Breast epithelium (tissue), 4 donors: ENCODE measurements at regions of chr11 and their contacts with region 1.

Region 1: DNA sequence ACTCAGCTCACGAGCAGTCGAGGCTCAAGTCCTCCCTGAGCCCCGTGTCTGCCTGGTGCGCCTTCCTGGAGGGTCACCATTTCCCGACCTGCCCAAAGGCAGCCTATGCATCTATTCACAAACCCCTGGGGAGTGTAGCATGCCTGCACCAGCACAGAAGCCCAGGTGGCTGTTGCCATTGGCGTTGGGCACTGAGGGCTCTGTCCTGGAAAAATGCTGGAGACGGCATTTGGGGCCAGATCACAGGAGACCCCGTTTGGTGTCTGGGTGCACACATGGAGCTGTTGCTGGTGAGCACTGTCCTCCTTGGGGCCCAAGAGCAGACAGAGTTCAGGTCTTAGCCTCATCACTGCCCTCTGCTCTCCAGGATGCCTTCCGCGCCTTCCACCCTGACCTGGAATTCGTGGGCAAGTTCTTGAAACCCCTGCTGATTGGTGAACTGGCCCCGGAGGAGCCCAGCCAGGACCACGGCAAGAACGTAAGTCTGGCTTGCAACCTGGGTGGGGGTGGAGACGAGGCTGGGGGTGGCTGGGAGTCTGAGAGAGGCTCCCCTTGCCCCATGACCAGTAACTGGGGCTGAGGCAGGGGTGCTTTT is 9.4 kb downstream of the FADS2 start:
- DNase-seq: no peak
- H3K4me3 ChIP-seq: no peak overlapping the region
- H3K27ac ChIP-seq: no peak overlapping the region
- H3K4me1 ChIP-seq: no peaks in the 10 kb centered on the region
- H3K27me3 ChIP-seq: no peaks in the 10 kb centered on the region
- CTCF ChIP-seq: no peak
- POLR2A ChIP-seq: no peak

Region 2: GRCh38 chr11:61657566-61657965 is 179.9 kb before region 1 on chr11:
- intact Hi-C with region 1: no loop called
- DNase-seq: peak in 1 of 2 donors; percentile 48
- H3K4me3 ChIP-seq: no peak overlapping the region
- H3K27ac ChIP-seq: no peak overlapping the region
- H3K4me1 ChIP-seq: no peaks in the 10 kb centered on the region
- H3K27me3 ChIP-seq: no peaks in the 10 kb centered on the region
- CTCF ChIP-seq: peak in 2 of 3 donors; percentile 13 to 23
- POLR2A ChIP-seq: no peak

Region 3: DNA sequence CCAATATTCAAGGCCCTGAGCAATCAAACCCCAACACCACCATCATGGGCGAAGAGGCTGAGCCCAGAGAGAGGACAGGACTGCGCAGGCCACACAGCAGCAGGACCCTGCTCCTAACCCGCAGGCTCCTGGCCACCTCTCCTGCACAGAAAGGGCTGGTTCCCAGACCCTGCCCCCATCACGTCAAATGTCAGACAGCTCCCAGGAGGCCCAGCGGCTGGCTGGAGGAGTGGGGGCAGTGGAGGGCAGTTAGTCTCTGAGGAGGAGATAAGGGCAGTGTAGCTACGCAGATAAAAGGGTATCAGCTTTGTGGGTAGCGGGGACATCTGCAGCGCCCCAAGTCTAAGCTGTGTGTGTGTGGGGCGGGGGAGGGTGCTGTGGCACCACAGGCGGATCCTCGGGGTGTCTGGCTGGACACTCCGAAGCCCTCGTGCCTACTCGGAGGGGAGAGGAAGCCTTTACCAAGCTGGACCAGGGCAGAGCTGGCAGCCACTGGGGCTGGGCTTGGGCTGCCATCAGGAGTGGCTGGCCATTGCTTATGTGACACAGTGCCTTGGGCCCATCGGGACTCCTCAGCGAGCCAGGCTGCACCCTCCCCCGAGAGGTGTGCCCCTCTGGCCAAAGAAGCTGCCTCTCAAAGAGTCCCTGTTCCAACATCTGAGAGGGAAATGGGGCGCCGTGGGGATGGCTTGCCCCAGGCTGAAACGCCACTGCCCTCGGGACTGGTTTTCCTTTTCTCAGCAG is 32.4 kb after region 1 on chr11:
- intact Hi-C with region 1: loop called (anchors 1 kb)
- DNase-seq: no peak
- H3K4me3 ChIP-seq: no peak overlapping the region
- H3K27ac ChIP-seq: no peak overlapping the region
- H3K4me1 ChIP-seq: no peaks in the 10 kb centered on the region
- H3K27me3 ChIP-seq: no peaks in the 10 kb centered on the region
- CTCF ChIP-seq: no peak
- POLR2A ChIP-seq: no peak